MCF 10A (cell line): ENCODE measurements at regions of chr18 and their contacts with region 1.

Region 1: GRCh38 chr18:76982841-76983587 is 149.6 kb downstream of the MBP start:
- DNase-seq: peak; percentile 86
- H3K4me3 Mint-ChIP-seq: peak overlapping the region; percentile 50
- H3K27ac Mint-ChIP-seq: no peak overlapping the region
- H3K4me1 Mint-ChIP-seq: peaks cover 5% of the 10 kb centered on the region
- H3K27me3 Mint-ChIP-seq: peaks cover 4% of the 10 kb centered on the region
- CTCF ChIP-seq: peak; percentile 89

Region 2: GRCh38 chr18:76932026-76932819 is 50.8 kb before region 1 on chr18:
- CTCF ChIA-PET with region 1: interaction called, 11 read pairs
- POLR2A ChIA-PET with region 1: no interaction called
- intact Hi-C with region 1: no loop called
- DNase-seq: no peak
- H3K4me3 Mint-ChIP-seq: no peak overlapping the region
- H3K27ac Mint-ChIP-seq: no peak overlapping the region
- H3K4me1 Mint-ChIP-seq: no peaks in the 10 kb centered on the region
- H3K27me3 Mint-ChIP-seq: no peaks in the 10 kb centered on the region
- CTCF ChIP-seq: no peak

Region 3: DNA sequence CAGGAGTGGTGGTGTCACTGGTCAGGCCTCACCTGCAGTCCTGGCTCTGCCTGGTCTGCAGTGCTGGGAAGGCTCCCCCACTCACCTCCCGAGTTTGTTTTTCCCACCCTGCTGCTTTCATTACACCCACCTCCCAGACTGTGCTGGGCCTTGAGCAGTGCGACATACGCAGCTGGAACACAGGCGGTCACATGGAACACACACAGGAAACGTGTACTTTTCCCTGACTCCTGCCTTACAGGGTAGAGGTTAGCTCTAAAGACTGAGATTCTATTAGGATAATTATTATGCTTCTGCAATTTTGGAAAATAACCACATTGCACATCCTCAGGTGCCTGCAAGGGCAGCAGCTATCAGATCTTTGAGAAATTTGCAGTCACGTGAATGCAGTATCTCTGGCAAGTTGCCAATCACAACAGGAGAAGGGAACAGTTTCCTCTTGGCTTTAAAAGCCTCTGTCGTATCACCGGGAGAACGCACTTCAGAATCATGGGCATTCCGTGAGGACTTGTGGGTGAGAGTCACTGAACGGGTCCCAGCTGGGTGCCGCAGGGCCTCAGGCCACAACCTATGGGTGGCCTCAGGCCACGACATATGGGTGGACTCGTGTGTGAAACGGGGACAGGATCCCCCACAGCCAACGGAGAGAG is 24.2 kb before region 1 on chr18:
- CTCF ChIA-PET with region 1: interaction called, 18 read pairs
- POLR2A ChIA-PET with region 1: no interaction called
- intact Hi-C with region 1: no loop called
- DNase-seq: no peak
- H3K4me3 Mint-ChIP-seq: no peak overlapping the region
- H3K27ac Mint-ChIP-seq: no peak overlapping the region
- H3K4me1 Mint-ChIP-seq: no peaks in the 10 kb centered on the region
- H3K27me3 Mint-ChIP-seq: no peaks in the 10 kb centered on the region
- CTCF ChIP-seq: no peak

Region 4: GRCh38 chr18:76970770-76971559 is 12.0 kb before region 1 on chr18:
- CTCF ChIA-PET with region 1: interaction called, 19 read pairs
- POLR2A ChIA-PET with region 1: no interaction called
- intact Hi-C with region 1: no loop called
- DNase-seq: no peak
- H3K4me3 Mint-ChIP-seq: no peak overlapping the region
- H3K27ac Mint-ChIP-seq: no peak overlapping the region
- H3K4me1 Mint-ChIP-seq: no peaks in the 10 kb centered on the region
- H3K27me3 Mint-ChIP-seq: no peaks in the 10 kb centered on the region
- CTCF ChIP-seq: no peak

Region 5: GRCh38 chr18:77086034-77086433 is 103.0 kb after region 1 on chr18:
- CTCF ChIA-PET with region 1: interaction called, 15 read pairs
- POLR2A ChIA-PET with region 1: no interaction called
- intact Hi-C with region 1: no loop called
- DNase-seq: peak; percentile 92
- H3K4me3 Mint-ChIP-seq: peak overlapping the region; percentile 28
- H3K27ac Mint-ChIP-seq: no peak overlapping the region
- H3K4me1 Mint-ChIP-seq: peaks cover 59% of the 10 kb centered on the region
- H3K27me3 Mint-ChIP-seq: no peaks in the 10 kb centered on the region
- CTCF ChIP-seq: no peak

Region 6: GRCh38 chr18:77300579-77300978 is 317.6 kb after region 1 on chr18:
- CTCF ChIA-PET with region 1: no interaction called
- POLR2A ChIA-PET with region 1: no interaction called
- intact Hi-C with region 1: no loop called
- DNase-seq: no peak
- H3K4me3 Mint-ChIP-seq: no peak overlapping the region
- H3K27ac Mint-ChIP-seq: no peak overlapping the region
- H3K4me1 Mint-ChIP-seq: peaks cover 4% of the 10 kb centered on the region
- H3K27me3 Mint-ChIP-seq: peaks cover 28% of the 10 kb centered on the region
- CTCF ChIP-seq: no peak

Region 7: DNA sequence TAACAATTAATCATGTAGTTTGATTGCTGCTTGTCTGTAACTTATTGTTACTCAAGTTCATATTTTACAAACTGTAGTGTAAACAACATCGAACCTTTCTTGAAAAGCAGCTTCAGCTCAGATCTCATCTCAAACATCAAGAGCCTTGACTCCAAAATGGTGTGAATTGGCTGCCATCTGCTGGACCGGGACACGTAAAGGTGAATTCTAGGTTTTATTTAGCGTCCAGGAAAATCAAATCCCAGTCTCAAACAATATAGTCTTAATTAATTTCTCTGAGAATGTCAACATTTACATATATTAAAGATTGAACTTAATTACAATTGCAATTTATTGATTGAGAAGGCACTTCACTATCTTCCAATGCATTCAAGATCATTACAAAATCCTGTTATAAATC is 719.7 kb after region 1 on chr18:
- CTCF ChIA-PET with region 1: interaction called, 7 read pairs
- POLR2A ChIA-PET with region 1: no interaction called
- intact Hi-C with region 1: loop called (anchors 5 kb)
- DNase-seq: peak; percentile 44
- H3K4me3 Mint-ChIP-seq: no peak overlapping the region
- H3K27ac Mint-ChIP-seq: no peak overlapping the region
- H3K4me1 Mint-ChIP-seq: no peaks in the 10 kb centered on the region
- H3K27me3 Mint-ChIP-seq: peaks cover 43% of the 10 kb centered on the region
- CTCF ChIP-seq: peak; percentile 57